MCF 10A (cell line): ENCODE measurements at regions of chr1 and their contacts with region 1.

Region 1: DNA sequence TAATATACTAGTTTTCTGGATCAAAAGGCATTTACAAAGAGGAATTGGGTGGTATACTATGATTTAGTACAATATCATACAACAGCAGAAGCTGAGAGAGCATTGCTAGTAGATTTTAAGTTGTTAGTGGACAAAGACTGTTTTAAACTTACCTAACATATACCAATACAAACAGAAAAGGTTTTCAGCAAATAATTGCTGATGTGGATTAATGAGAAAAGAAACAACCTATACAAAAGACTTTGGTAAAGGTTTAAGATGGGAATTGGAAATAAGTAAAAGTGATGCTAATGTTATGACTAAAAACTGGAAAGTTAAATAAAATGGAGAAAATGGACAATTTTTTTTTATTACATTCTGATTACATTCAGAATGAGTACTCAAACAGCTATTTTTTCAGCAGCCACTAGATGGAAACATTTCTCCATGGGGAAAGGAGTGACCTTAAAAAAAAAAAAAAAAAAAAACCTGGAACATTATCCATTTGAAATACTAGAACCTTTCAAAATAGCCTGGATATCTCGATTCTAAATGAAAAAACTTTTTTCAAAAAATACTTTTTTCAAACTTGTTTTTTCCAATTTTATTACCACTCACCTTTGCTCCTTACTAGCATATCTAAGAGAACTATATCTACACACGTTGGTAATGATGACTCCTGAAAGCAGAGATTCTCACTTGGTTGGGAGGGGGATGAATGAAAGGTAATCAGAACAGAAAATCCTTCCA is 55.4 kb downstream of the EPRS1 start:
- DNase-seq: peak; percentile 75
- H3K4me3 Mint-ChIP-seq: no peak overlapping the region
- H3K27ac Mint-ChIP-seq: no peak overlapping the region
- H3K4me1 Mint-ChIP-seq: no peaks in the 10 kb centered on the region
- H3K27me3 Mint-ChIP-seq: no peaks in the 10 kb centered on the region
- CTCF ChIP-seq: peak; percentile 62

Region 2: DNA sequence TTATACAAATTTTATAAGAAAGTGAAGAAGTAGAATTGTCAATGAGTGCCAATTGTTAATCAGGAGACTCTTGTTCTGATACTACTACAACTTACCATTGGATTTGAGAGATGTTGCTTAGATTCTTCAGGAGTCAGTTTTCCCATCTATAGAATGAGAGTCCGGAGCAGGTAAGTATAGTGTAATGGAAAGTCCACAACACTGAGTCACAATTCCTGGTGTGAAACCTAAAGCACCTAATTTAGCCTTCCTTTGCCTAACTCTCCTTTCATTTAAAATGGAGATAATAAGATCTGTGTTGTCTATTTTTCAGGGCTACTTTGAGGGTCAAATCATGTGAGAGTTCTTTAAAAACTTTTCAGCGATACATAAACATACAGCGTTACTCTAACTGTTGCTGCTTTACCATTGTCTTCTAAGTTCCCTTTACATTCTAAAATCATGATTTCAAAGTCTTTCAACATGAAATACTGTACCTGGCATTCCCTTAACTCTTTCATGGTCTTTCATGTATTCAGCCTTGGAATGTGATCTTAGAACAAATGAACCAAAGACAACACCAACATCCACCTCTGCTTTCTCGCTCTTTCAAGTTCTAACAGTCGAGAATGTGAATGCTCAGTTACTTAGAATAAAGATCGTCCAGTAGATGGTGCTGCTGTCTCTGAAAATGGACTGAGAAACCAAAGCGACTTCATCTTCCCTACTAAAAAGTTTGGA is 153.5 kb before region 1 on chr1:
- CTCF ChIA-PET with region 1: interaction called, 11 read pairs
- POLR2A ChIA-PET with region 1: no interaction called
- intact Hi-C with region 1: loop called (anchors 5 kb)
- DNase-seq: peak; percentile 85
- H3K4me3 Mint-ChIP-seq: no peak overlapping the region
- H3K27ac Mint-ChIP-seq: no peak overlapping the region
- H3K4me1 Mint-ChIP-seq: no peaks in the 10 kb centered on the region
- H3K27me3 Mint-ChIP-seq: peaks cover 95% of the 10 kb centered on the region
- CTCF ChIP-seq: peak; percentile 85

Region 3: GRCh38 chr1:219973213-219973612 is 17.7 kb before region 1 on chr1:
- CTCF ChIA-PET with region 1: interaction called, 32 read pairs
- POLR2A ChIA-PET with region 1: interaction called, 5 read pairs
- intact Hi-C with region 1: no loop called
- DNase-seq: no peak
- H3K4me3 Mint-ChIP-seq: no peak overlapping the region
- H3K27ac Mint-ChIP-seq: no peak overlapping the region
- H3K4me1 Mint-ChIP-seq: no peaks in the 10 kb centered on the region
- H3K27me3 Mint-ChIP-seq: no peaks in the 10 kb centered on the region
- CTCF ChIP-seq: no peak

Region 4: DNA sequence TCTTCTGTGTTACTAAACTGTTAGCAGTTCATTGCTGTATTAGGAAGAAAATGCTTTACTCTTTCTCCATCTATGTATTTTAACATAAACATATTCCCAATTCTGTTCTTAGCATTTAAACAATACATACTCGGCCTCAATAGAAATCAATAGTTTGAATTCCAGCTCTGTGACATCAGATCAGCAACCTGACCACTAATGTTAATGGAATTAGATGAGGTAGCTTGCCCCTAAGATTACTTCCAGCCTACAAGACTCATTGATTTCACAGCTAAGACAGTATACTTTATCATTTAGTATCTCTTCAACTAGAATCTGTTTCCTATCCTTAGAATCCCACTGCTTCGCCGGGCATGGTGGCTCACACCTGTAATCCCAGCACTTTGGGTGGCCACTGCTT is 16.5 kb after region 1 on chr1:
- CTCF ChIA-PET with region 1: interaction called, 58 read pairs
- POLR2A ChIA-PET with region 1: interaction called, 4 read pairs
- intact Hi-C with region 1: loop called (anchors 2 kb)
- DNase-seq: no peak
- H3K4me3 Mint-ChIP-seq: no peak overlapping the region
- H3K27ac Mint-ChIP-seq: peak overlapping the region; percentile 3
- H3K4me1 Mint-ChIP-seq: peaks cover 7% of the 10 kb centered on the region
- H3K27me3 Mint-ChIP-seq: no peaks in the 10 kb centered on the region
- CTCF ChIP-seq: no peak

Region 5: GRCh38 chr1:220013497-220013896 is 22.6 kb after region 1 on chr1:
- CTCF ChIA-PET with region 1: interaction called, 58 read pairs
- POLR2A ChIA-PET with region 1: interaction called, 5 read pairs
- intact Hi-C with region 1: no loop called
- DNase-seq: peak; percentile 51
- H3K4me3 Mint-ChIP-seq: no peak overlapping the region
- H3K27ac Mint-ChIP-seq: peak overlapping the region; percentile 59
- H3K4me1 Mint-ChIP-seq: peaks cover 24% of the 10 kb centered on the region
- H3K27me3 Mint-ChIP-seq: no peaks in the 10 kb centered on the region
- CTCF ChIP-seq: no peak

Region 6: DNA sequence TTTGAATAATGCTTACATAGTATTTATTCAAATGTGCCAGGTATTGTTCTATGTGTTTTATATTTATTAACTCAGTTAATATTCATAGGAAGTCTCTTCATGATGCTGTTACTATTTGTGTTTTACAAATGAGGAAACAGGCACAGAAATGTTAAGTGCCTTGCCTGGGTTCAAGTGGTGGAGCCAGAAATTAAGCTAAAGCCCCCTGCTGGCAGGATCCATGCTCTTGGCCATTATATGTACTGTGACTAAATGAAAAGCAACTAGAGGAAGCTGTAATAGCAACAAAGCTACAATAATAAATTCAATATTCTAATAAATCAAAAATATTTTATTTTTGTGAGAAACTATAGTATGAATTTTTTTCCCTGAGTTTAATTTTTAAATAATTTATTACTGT is 132.9 kb after region 1 on chr1:
- CTCF ChIA-PET with region 1: interaction called, 5 read pairs
- POLR2A ChIA-PET with region 1: no interaction called
- intact Hi-C with region 1: loop called (anchors 5 kb)
- DNase-seq: peak; percentile 43
- H3K4me3 Mint-ChIP-seq: no peak overlapping the region
- H3K27ac Mint-ChIP-seq: peak overlapping the region; percentile 5
- H3K4me1 Mint-ChIP-seq: peaks cover 10% of the 10 kb centered on the region
- H3K27me3 Mint-ChIP-seq: no peaks in the 10 kb centered on the region
- CTCF ChIP-seq: peak; percentile 39

Region 7: GRCh38 chr1:220137019-220137786 is 146.3 kb after region 1 on chr1:
- CTCF ChIA-PET with region 1: no interaction called
- POLR2A ChIA-PET with region 1: no interaction called
- intact Hi-C with region 1: no loop called
- DNase-seq: no peak
- H3K4me3 Mint-ChIP-seq: no peak overlapping the region
- H3K27ac Mint-ChIP-seq: peak overlapping the region; percentile 49
- H3K4me1 Mint-ChIP-seq: no peaks in the 10 kb centered on the region
- H3K27me3 Mint-ChIP-seq: no peaks in the 10 kb centered on the region
- CTCF ChIP-seq: no peak